ENCODE measurements at regions of chr11 and their contacts with region 1.

Region 1: GRCh38 chr11:121655537-121656327 is 203.0 kb upstream of the SORL1-AS1 start:
- DNase-seq: peak; percentile 91
- H3K4me3 ChIP-seq: peak overlapping the region; percentile 43 to 47
- H3K27ac ChIP-seq: peak overlapping the region; percentile 81 to 94
- H3K4me1 ChIP-seq: peaks cover 25% of the 10 kb centered on the region
- H3K27me3 ChIP-seq: no peaks in the 10 kb centered on the region
- CTCF ChIP-seq: peak; percentile 77 to 95 (median 92)
- POLR2A ChIP-seq: no peak

Region 2: DNA sequence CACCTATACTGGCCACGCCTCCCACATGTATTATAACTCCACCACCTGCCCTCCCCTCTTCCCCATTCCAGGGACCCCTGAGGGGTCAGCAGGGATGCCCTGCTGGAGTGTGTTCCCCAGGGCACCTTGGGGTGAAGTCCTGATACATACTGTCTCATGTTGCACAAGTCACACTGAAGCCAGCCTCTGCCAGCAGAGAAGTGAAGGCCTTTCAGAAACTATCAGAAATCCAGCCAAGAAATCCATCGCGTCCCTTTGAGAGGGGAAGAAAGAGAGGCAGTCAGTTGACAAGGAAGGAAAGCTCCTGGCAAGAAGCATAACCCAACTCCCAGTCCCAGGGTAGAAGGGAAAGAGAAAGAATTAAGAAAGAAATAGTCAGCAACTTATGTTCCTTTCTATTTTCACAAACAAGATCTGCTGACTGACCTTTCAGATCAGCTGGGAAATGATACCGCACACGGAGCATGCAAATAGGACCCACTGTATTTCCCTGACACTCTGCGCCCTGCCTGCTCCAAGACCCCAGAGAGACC is 317.9 kb before region 1 on chr11:
- intact Hi-C with region 1: no loop called
- DNase-seq: peak; percentile 57
- H3K4me3 ChIP-seq: no peak overlapping the region
- H3K27ac ChIP-seq: peak overlapping the region; percentile 78 to 79
- H3K4me1 ChIP-seq: peaks cover 53% of the 10 kb centered on the region
- H3K27me3 ChIP-seq: no peaks in the 10 kb centered on the region
- CTCF ChIP-seq: no peak
- POLR2A ChIP-seq: no peak

Region 3: DNA sequence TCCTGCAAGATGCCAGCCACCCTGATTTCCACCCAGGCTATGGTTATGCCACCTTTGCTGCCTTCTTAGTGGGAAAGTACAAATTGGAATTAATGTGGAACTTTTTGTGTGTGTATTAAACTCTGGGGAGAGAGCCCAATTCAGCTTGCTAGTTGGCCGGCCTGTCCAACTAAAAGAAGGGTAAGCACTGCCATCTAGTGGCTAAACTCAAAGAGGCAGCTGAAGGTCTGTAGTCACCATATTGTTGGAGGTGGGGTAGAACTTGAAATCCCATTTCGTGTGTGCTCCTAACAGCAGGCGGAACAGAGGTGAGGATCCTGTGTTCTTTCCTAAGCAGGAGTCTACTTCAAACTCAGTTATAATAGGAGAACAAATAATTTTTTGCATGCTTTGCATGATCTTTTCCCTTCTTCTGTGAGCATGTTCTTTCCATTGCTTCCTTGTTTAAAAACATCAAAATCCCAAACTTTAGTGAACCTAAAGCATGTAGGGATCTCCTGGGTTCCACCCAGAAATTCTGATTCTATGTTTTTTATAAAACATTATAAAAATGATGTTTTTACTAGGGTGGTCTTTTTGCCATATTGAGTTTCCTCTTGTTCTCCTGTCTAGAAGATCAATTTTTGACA is 64.2 kb before region 1 on chr11:
- intact Hi-C with region 1: no loop called
- DNase-seq: peak; percentile 88
- H3K4me3 ChIP-seq: no peak overlapping the region
- H3K27ac ChIP-seq: no peak overlapping the region
- H3K4me1 ChIP-seq: no peaks in the 10 kb centered on the region
- H3K27me3 ChIP-seq: no peaks in the 10 kb centered on the region
- CTCF ChIP-seq: peak; percentile 81 to 87 (median 84)
- POLR2A ChIP-seq: no peak

Region 4: DNA sequence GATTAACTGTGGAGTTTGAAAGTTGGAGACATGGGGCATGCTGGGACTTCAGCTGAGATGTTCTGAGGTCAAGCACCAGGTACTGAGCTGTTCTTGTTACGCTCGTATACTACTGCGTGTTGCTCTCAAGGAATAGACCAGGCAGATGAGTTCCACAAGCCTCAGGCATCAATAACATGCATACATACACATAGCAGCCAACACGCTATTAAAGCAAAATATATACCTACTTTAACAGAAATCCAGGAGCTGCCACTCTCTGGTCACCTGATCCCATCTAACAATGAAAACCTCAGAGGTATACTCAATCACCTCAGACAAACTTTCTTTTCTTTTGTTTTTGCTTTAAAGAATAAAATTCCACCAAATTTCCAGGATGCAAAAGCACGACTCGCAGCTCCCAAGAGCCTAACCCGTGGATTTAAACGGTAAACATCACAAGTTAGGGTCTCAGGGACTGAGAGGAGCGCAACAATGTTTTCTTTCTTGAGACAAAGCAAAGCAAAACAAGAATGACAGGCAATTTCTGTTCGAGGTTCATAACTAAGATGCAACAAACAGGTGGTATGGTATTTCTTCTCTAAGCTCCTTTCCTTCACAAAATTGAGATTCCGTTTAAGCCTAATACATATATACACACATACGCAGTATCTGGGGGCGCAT is 443.8 kb after region 1 on chr11:
- intact Hi-C with region 1: loop called (anchors 5 kb)
- DNase-seq: peak; percentile 60
- H3K4me3 ChIP-seq: peak overlapping the region; percentile 70 to 74
- H3K27ac ChIP-seq: peak overlapping the region; percentile 78 to 92
- H3K4me1 ChIP-seq: peaks cover 6% of the 10 kb centered on the region
- H3K27me3 ChIP-seq: no peaks in the 10 kb centered on the region
- CTCF ChIP-seq: no peak
- POLR2A ChIP-seq: no peak

Region 5: DNA sequence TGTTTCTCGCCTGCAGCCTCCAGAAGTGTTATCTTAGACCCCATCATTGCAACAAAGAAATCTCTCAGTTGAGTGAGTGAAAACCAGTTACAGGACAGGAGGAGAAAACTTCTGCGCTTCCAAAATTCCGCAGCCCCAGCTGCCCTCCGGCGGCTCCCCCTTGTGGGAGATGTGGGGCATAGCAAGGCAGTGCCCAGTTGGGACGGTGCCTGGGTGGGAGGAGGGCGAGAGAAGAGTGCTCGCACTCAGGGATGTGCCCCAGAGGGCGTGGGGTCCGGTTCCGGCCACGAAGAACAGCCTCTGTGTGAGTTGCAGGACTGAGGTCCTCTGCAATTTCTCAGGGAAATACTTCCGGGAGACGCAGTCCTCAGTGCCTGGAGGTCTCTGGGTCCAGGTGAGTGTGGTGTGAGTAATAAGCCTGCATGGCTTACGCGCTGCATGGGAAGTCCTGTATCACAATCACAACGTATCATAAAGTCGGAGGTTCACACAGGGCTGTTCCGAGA is 547.3 kb after region 1 on chr11:
- intact Hi-C with region 1: loop called (anchors 5 kb)
- DNase-seq: peak; percentile 79
- H3K4me3 ChIP-seq: peak overlapping the region; percentile 34 to 55
- H3K27ac ChIP-seq: peak overlapping the region; percentile 64 to 85
- H3K4me1 ChIP-seq: peaks cover 45% of the 10 kb centered on the region
- H3K27me3 ChIP-seq: no peaks in the 10 kb centered on the region
- CTCF ChIP-seq: peak; percentile 86 to 98 (median 97)
- POLR2A ChIP-seq: no peak